CD4-positive, alpha-beta T cell (primary cell): ENCODE measurements at regions of chr18 and their contacts with region 1.

Region 1: GRCh38 chr18:3048121-3048520 is 35.2 kb upstream of the LPIN2 start:
- DNase-seq: peak in 1 of 14 experiments; percentile 19
- ATAC-seq: no peak
- H3K4me3 ChIP-seq: no peak overlapping the region
- H3K4me3 Mint-ChIP-seq: no peak overlapping the region
- H3K27ac ChIP-seq: no peak overlapping the region
- H3K27ac Mint-ChIP-seq: no peak overlapping the region
- H3K4me1 ChIP-seq: peaks cover 17% of the 10 kb centered on the region
- H3K4me1 Mint-ChIP-seq: peaks cover 48% of the 10 kb centered on the region
- H3K27me3 ChIP-seq: no peaks in the 10 kb centered on the region
- H3K27me3 Mint-ChIP-seq: no peaks in the 10 kb centered on the region
- CTCF ChIP-seq: no peak

Region 2: DNA sequence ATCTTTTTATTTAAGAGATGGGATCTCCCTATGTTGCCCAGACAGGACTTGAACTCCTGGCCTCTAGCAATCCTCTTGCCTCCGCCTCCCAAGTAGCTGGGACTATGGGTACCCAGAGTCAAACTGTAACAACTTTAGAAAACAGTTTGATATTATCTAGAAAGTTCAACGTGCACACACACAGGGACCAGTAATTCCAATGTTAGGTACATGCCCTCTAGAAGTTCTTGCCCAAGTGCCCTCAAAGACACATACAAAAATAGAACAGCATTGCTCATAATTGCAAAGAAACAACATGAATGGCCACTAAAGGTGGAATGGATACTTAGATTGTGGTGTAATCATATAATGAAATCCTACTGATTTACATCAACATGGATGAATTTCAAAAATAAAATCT is 22.6 kb before region 1 on chr18:
- CTCF ChIA-PET with region 1: no interaction called
- POLR2A ChIA-PET with region 1: no interaction called
- intact Hi-C with region 1: loop called in 1 of 2 experiments (anchors 2 kb)
- DNase-seq: no peak
- ATAC-seq: no peak
- H3K4me3 ChIP-seq: no peak overlapping the region
- H3K4me3 Mint-ChIP-seq: no peak overlapping the region
- H3K27ac ChIP-seq: no peak overlapping the region
- H3K27ac Mint-ChIP-seq: no peak overlapping the region
- H3K4me1 ChIP-seq: peaks cover 6% of the 10 kb centered on the region
- H3K4me1 Mint-ChIP-seq: no peaks in the 10 kb centered on the region
- H3K27me3 ChIP-seq: no peaks in the 10 kb centered on the region
- H3K27me3 Mint-ChIP-seq: no peaks in the 10 kb centered on the region
- CTCF ChIP-seq: no peak

Region 3: DNA sequence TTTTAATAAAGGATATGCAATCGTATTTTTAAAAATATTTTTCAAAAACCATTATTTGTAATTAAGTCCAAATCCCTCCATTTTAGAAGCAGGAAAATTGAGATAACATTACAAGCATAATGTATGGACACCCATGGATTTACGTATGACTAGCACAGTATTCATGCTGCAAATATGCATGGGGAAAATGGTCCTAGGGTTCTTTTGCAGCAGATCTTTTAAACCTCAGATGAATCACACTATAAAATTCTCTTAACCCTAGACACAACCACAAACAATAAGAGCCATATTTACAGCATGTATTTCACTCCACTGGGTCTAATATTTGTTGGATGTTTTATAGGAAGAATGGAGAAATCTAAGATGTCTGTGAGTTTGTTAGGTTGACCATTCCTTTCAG is 855.2 kb after region 1 on chr18:
- CTCF ChIA-PET with region 1: no interaction called
- POLR2A ChIA-PET with region 1: no interaction called
- intact Hi-C with region 1: no loop called
- DNase-seq: no peak
- ATAC-seq: no peak
- H3K4me3 ChIP-seq: no peak overlapping the region
- H3K4me3 Mint-ChIP-seq: no peak overlapping the region
- H3K27ac ChIP-seq: no peak overlapping the region
- H3K27ac Mint-ChIP-seq: no peak overlapping the region
- H3K4me1 ChIP-seq: no peaks in the 10 kb centered on the region
- H3K4me1 Mint-ChIP-seq: no peaks in the 10 kb centered on the region
- H3K27me3 ChIP-seq: no peaks in the 10 kb centered on the region
- H3K27me3 Mint-ChIP-seq: peaks cover 27% of the 10 kb centered on the region
- CTCF ChIP-seq: no peak